Activated CD8-positive, alpha-beta T cell treated with anti-CD3 and anti-CD28 coated beads for 36 hours (primary cell): ENCODE measurements at regions of chr4 and their contacts with region 1.

Region 1: DNA sequence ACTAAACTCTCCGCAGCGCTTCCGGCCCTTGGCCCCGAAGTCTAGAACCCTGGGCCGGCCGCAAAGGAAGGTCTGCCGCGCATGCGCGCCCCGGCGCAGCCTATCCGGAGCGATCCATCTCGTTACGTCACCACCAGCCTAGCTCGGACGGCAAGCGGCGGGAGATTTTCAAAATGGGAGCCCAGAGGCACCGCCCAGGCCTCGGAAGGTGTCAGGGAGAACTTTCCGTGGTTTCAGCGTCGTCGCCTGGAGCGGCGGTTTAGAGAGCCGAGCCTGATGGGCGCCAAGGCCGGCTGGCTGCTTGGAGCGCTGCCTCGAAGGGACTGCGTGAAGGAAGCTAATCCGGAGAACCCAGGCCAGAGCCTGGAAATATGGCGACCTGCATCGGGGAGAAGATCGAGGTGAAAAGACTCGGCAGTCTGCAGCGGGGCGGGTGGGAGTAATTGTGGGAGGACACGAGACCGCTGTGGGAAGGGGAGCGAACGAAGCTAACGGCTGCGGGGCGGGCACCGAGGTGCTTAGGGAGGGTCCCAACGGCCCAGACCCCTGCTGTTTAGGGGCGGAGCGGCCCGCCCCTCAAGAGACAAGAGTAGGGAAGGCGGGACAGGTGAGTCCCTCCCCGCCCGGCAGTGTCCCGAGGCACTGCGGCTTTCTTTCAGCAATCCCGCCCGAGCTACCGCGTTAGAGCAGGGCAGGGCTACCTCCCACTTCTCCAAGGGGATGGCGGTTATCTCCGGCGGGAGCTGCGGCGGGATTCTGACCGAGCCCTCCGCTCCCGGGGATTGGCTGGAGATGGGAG is at the start of gene PLK4:
- DNase-seq: peak; percentile 97
- ATAC-seq: peak; percentile 96
- H3K4me3 Mint-ChIP-seq: peak within 1 kb of the TSS; percentile 98
- H3K27ac Mint-ChIP-seq: peak within 1 kb of the TSS; percentile 98
- H3K4me1 Mint-ChIP-seq: peaks cover 11% of the 10 kb centered on the region
- H3K27me3 Mint-ChIP-seq: no peaks in the 10 kb centered on the region
- CTCF ChIP-seq: no peak
- total RNA-seq, gene PLK4: 42.0 to 45.1 TPM

Region 2: GRCh38 chr4:127708985-127709384 is 172.0 kb before region 1 on chr4:
- CTCF ChIA-PET with region 1: no interaction called
- POLR2A ChIA-PET with region 1: no interaction called
- intact Hi-C with region 1: no loop called
- DNase-seq: no peak
- ATAC-seq: no peak
- H3K4me3 Mint-ChIP-seq: no peak overlapping the region
- H3K27ac Mint-ChIP-seq: no peak overlapping the region
- H3K4me1 Mint-ChIP-seq: no peaks in the 10 kb centered on the region
- H3K27me3 Mint-ChIP-seq: no peaks in the 10 kb centered on the region
- CTCF ChIP-seq: no peak

Region 3: DNA sequence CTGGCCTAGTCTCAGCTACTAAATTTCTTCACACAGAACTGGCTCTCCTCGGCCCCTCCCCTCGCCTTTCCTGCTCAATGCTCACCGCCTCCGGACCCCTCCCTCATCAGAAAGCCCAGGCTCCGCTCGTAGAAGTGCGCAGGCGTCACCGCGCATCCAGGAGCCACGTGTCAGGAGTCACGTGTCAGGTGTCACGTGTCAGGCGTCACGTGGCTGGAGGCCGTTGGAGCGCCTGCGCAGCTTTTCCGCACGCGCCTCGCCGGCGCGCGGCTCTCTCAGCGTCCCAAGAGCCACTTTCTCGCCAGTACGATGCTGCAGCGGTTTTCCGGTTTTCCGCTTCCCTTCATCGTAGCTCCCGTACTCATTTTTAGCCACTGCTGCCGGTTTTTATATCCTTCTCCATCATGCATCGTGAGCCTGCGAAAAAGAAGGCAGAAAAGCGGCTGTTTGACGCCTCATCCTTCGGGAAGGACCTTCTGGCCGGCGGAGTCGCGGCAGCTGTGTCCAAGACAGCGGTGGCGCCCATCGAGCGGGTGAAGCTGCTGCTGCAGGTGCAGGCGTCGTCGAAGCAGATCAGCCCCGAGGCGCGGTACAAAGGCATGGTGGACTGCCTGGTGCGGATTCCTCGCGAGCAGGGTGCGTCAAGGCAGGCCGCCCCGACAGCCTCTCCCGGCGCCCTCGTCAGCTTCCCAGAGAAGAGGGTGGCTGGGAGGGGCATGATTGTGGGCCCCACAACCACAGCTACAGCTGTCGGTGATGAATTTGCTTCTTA is 150.6 kb before region 1 on chr4 and contains the start of gene SLC25A31:
- CTCF ChIA-PET with region 1: no interaction called
- POLR2A ChIA-PET with region 1: no interaction called
- intact Hi-C with region 1: no loop called
- DNase-seq: no peak
- ATAC-seq: no peak
- H3K4me3 Mint-ChIP-seq: no peak within 1 kb of the TSS
- H3K27ac Mint-ChIP-seq: no peak within 1 kb of the TSS
- H3K4me1 Mint-ChIP-seq: no peaks in the 10 kb centered on the region
- H3K27me3 Mint-ChIP-seq: peaks cover 4% of the 10 kb centered on the region
- CTCF ChIP-seq: no peak
- total RNA-seq, gene SLC25A31: not detected

Region 4: GRCh38 chr4:127782274-127783025 is 98.5 kb before region 1 on chr4 and contains the start of gene HSPA4L:
- CTCF ChIA-PET with region 1: no interaction called
- POLR2A ChIA-PET with region 1: no interaction called
- intact Hi-C with region 1: loop called (anchors 5 kb)
- DNase-seq: peak; percentile 76
- ATAC-seq: peak; percentile 55
- H3K4me3 Mint-ChIP-seq: peak within 1 kb of the TSS; percentile 76
- H3K27ac Mint-ChIP-seq: peak within 1 kb of the TSS; percentile 88
- H3K4me1 Mint-ChIP-seq: peaks cover 22% of the 10 kb centered on the region
- H3K27me3 Mint-ChIP-seq: peaks cover 62% of the 10 kb centered on the region
- CTCF ChIP-seq: no peak
- total RNA-seq, gene HSPA4L: 4.1 to 4.6 TPM

Region 5: DNA sequence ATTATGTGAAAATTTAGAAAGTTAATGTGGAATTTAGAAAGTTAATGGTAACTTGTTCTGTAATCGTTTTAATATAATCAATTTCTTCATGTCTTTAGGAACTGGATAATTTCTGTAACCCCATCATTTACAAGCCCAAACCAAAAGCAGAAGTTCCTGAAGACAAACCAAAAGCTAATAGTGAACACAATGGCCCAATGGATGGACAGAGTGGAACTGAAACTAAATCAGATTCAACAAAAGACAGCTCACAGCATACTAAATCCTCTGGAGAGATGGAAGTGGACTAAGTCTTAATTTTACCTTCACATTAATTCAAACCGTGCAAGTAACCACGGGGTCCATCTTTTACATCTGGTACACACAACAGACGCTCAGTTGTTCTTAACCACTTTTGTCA is 48.4 kb before region 1 on chr4:
- CTCF ChIA-PET with region 1: no interaction called
- POLR2A ChIA-PET with region 1: no interaction called
- intact Hi-C with region 1: no loop called
- DNase-seq: no peak
- ATAC-seq: no peak
- H3K4me3 Mint-ChIP-seq: no peak overlapping the region
- H3K27ac Mint-ChIP-seq: no peak overlapping the region
- H3K4me1 Mint-ChIP-seq: no peaks in the 10 kb centered on the region
- H3K27me3 Mint-ChIP-seq: peaks cover 2% of the 10 kb centered on the region
- CTCF ChIP-seq: no peak